Activated T-helper 2 cell treated with anti-CD3 and anti-CD28 coated beads, Interferon-gamma antibody, Interleukin-2, Interleukin-4, amounts not matched to agents 10 μg/mL and 5 μg/mL and 100 μg/mL, durations not matched to agents 14 hours and 24 hours and 36 hours (primary cell): ENCODE measurements at regions of chr4 and their contacts with region 1.

Region 1: DNA sequence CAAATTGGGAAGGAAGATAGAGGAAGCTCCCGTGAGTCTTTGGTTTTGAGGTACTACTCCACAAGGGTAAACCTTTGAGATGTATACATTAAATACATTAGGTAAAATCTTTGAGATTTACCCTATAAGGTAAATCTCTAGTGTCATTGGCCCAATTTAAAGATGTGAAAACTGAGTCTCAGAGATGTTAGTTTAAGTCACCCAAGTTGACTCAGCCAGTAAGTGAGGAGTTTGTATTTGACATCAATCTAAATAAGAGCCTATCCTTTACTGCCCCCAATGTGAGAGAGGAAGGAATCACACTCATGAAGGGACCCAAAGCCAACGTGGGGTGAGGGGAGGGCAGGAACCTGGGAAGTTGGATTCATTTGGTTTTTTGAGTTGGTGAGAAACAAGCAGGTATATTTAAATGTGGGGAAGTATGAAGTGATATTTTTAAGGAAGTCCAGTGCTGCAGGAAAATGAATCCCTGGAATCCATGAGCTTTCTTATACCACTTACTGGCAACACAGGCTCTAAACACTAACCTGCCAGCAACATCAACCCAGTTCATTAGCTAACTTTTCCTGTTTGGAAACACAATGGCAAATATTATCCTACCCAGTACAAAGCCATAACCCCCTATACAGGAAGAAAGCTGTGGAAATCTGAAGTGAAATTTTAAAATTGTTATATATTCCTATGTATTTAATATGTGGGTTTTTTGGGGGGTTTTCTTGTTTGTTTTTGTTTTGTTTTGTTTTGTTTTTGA is 55.3 kb downstream of the PALLD start:
- DNase-seq: no peak
- H3K4me3 Mint-ChIP-seq: no peak overlapping the region
- H3K27ac Mint-ChIP-seq: no peak overlapping the region
- H3K4me1 Mint-ChIP-seq: no peaks in the 10 kb centered on the region
- H3K27me3 Mint-ChIP-seq: peaks cover 10% of the 10 kb centered on the region

Region 2: GRCh38 chr4:168183717-168184608 is 368.2 kb before region 1 on chr4:
- intact Hi-C with region 1: loop called (anchors 1 kb)
- DNase-seq: no peak
- H3K4me3 Mint-ChIP-seq: no peak overlapping the region
- H3K27ac Mint-ChIP-seq: no peak overlapping the region
- H3K4me1 Mint-ChIP-seq: peaks cover 4% of the 10 kb centered on the region
- H3K27me3 Mint-ChIP-seq: peaks cover 4% of the 10 kb centered on the region